ENCODE measurements at regions of chr15 and their contacts with region 1.

Region 1: DNA sequence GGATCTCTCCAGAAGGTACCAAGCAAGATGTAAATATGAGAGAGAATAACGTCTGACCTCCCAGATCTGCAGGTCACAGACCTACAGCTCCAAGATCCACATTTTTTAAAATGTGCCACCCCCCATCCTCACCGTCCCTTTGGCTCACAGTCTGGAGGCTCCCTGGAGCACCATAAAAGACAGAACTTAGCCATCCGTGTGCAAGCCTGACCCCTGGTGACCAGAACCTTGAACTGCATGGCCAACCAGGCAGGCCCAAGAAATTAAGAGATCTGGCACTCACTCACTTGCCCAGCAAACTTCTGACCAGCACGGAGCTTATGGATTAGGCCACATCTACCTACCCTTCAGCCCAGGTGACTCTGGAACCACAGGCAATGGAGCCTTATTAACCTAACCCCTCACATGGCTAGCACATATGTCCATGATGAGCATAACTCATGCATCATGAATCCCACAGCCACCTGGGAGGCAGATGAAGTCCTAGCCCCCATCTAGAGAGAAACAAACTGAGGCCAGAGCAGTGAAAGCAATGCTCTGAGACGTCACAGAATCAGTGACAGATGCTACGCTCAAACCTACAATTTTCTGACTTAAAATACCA is 275.3 kb downstream of the UACA start:
- DNase-seq: peak; percentile 60
- H3K4me3 ChIP-seq: no peak overlapping the region
- H3K27ac ChIP-seq: no peak overlapping the region
- H3K4me1 ChIP-seq: peaks cover 22% of the 10 kb centered on the region
- H3K27me3 ChIP-seq: peaks cover 11% of the 10 kb centered on the region
- CTCF ChIP-seq: peak; percentile 98 to 99

Region 2: DNA sequence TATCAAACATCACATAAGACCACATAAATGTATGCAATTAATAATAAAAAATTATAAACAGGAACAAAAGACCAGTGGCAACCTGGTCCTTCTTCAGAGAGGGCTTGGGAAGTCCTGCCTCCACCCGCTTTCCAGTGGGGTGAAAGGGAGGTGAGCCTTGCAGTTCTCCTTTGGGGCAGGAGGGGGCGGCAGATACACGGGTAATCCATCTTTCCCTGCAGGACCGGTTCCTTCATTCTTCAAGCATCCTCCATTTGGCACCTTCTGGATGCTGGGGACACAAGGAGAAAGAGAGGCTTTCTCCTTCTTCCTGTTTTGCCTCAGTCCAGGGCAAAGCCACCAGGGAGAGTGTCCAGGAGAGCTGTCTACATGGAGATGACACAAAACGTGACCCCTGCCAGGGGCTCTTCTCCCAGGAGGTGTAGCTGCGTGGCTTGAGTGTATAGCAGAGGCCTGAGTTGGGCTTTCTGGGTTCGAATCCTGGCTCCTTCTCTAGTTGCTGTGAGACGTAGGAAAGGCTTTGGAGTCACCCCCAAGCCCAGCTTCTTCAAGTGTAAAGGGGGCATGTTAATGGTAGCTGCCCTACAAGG is 1012.2 kb before region 1 on chr15:
- CTCF ChIA-PET with region 1: no interaction called
- dilution Hi-C with region 1: no loop called
- in situ Hi-C with region 1: loop called (anchors 10 to 25 kb)
- intact Hi-C with region 1: loop called (anchors 1 kb)
- DNase-seq: peak; percentile 65
- H3K4me3 ChIP-seq: no peak overlapping the region
- H3K27ac ChIP-seq: no peak overlapping the region
- H3K4me1 ChIP-seq: peaks cover 5% of the 10 kb centered on the region
- H3K27me3 ChIP-seq: no peaks in the 10 kb centered on the region
- CTCF ChIP-seq: peak; percentile 98

Region 3: GRCh38 chr15:69576035-69576526 is 912.0 kb before region 1 on chr15:
- CTCF ChIA-PET with region 1: no interaction called
- dilution Hi-C with region 1: no loop called
- in situ Hi-C with region 1: loop called in 1 of 2 experiments (anchors 10 kb)
- intact Hi-C with region 1: loop called (anchors 1 kb)
- DNase-seq: peak; percentile 19
- H3K4me3 ChIP-seq: no peak overlapping the region
- H3K27ac ChIP-seq: no peak overlapping the region
- H3K4me1 ChIP-seq: no peaks in the 10 kb centered on the region
- H3K27me3 ChIP-seq: no peaks in the 10 kb centered on the region
- CTCF ChIP-seq: peak; percentile 64 to 92

Region 4: DNA sequence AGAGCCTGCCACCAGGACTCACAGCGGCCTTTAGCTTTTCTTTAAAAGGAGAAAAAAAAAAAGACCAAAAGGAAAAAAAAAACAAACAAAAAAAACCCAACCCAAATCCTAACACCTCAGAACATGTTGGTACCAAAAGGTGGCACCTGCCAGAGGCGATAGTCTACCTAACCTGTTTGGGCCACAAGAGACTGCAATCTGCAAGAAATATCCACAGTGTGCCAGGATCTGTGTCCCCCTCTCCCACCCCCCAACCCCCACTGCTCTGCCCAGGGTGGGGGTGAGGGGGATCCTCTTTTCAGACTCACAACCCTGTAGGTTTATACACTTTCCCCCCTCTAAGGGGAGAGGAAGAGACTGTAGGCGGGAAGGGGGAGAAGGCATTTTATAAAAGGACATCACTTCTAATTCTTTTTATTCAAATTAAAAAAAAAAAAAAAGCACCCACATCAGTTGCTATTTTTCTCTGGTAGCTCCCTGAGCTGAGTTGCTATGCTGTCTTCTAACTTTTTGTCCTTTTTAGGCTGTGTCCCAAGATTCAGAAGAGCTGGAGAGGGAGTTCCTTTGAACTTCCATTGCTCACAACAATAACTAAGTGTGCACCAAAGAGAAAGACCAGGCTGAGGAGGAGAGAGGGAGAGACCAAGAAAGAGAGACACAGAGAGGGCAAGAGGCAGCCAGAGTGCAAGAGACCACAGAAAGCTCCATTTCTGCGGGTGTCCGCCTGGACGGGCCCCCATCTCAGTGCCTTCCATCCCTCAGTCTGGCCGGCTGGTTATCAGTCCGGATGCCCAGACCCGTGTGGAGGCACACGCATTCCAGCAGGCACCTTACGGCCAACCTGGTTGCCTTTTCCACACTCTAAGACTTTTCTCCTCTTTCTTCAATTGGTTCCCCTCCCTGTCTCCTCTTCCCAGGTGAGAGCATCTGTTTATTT is 439.3 kb before region 1 on chr15:
- CTCF ChIA-PET with region 1: interaction called, 12 read pairs
- dilution Hi-C with region 1: no loop called
- in situ Hi-C with region 1: no loop called
- intact Hi-C with region 1: no loop called
- DNase-seq: no peak
- H3K4me3 ChIP-seq: no peak overlapping the region
- H3K27ac ChIP-seq: no peak overlapping the region
- H3K4me1 ChIP-seq: no peaks in the 10 kb centered on the region
- H3K27me3 ChIP-seq: no peaks in the 10 kb centered on the region
- CTCF ChIP-seq: no peak

Region 5: DNA sequence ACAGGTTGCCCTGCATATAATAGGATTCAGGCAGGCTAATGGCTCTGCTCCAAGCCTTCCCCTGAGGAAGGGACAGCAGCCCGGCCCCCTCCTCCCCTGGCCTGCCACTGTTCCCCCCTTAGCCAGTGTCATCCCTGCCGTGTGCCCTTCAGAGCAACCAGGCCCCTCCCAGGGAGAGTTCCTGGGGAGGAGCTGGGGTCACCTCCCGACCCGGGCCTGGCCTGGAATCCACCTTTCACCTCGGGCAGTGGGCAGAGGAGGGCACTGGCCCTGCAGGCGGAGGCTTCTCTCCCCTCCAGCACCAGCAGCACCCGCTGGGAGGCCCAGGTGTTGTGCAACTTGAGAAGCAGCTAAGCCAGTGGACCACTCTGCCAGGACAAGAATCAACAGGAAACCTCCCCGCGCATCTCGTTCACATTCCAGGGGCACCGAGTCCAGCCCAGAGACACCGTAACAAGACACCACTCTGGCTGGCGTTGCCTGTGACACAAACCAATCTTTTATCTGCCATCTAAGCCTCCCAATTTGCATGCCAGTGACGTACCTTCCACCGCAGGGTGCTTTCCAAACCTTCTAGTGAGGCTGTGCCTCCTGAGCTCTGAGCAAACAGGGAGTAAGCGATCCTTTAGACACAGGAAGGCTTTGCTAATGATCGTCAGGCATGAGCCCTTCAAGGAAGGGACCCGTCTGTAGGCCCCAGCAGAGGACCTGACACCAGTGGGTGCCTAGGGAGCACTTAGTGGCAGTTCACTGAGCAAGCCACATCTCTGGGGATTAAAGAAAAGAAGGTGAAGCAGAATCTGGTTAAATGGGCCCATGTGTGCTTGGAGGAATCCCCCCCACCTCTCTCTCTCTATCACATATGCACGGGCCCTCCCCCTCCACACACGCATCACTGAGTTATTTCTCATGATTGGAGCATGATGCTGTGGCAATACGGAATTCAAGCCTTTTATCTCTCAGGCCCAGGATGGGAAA is 291.5 kb before region 1 on chr15:
- CTCF ChIA-PET with region 1: no interaction called
- dilution Hi-C with region 1: no loop called
- in situ Hi-C with region 1: no loop called
- intact Hi-C with region 1: loop called (anchors 5 kb)
- DNase-seq: peak; percentile 100
- H3K4me3 ChIP-seq: no peak overlapping the region
- H3K27ac ChIP-seq: peak overlapping the region; percentile 90
- H3K4me1 ChIP-seq: peaks cover 33% of the 10 kb centered on the region
- H3K27me3 ChIP-seq: no peaks in the 10 kb centered on the region
- CTCF ChIP-seq: peak in 1 of 2 donors; percentile 26

Region 6: DNA sequence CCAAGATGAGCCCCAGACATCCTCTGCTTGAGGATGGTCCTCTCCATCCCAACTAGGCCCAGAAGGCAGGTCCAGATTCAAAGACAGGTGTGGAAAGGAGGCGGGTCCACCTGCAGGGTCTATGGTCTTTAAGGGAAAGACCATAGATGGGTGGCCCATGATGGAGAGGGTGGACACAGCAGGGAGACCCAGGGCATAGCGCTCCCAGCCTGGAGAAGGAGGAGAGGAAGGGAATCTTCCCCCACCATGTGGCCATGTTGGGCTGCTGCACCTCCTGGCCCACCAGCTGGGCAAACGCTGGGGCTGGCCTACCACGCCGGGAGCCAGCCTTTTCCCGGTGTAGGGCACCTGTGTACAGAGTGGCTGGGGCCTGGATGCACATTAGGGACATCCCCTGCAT is 125.2 kb before region 1 on chr15:
- CTCF ChIA-PET with region 1: no interaction called
- dilution Hi-C with region 1: no loop called
- in situ Hi-C with region 1: no loop called
- intact Hi-C with region 1: loop called (anchors 1 kb)
- DNase-seq: no peak
- H3K4me3 ChIP-seq: no peak overlapping the region
- H3K27ac ChIP-seq: no peak overlapping the region
- H3K4me1 ChIP-seq: no peaks in the 10 kb centered on the region
- H3K27me3 ChIP-seq: no peaks in the 10 kb centered on the region
- CTCF ChIP-seq: peak; percentile 31 to 58

Region 7: DNA sequence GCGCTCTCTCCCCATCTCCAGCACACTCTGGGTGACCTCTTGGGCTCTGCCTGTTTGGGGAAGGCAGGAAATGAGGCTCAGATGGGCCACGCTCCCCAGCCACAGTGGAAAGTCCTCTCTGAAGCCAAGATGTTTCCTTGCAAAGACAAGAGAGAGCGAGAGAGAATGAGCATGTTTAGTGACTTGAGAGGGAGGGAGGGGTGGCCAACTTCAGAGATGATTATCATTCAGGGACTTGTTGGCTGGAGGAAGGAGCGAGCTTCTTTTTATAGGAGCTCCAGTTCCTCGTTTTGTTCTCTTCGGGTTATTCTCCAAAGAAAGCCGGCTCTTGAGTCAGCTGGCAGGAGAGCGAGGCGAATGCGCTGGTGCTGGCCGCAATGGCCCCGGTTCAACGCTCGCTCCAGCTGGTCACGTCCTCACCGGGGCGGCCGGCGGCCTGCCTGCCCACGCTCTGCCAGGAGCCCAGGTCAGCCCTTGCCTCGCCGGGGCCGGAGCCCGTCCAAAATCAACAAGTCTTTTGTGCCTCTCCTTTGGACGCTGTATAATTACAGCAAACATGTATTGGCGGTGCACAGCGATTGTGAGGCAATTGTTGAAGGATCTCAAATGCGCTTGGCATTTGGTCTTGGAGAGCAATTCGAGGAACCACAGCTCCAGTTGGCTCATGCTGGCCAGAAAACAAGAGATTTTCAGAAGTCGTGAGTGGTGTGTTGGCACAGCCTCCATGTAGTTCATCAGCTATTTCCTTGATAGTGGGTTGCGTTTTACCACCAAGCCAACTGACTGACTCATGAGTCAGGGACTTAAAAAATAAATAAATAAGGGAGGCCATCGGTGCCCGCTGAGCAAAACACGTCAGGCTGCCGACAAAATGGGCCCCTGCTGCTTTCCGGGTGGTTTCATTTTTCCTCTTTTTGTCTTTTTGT is 13.4 kb before region 1 on chr15:
- CTCF ChIA-PET with region 1: no interaction called
- dilution Hi-C with region 1: no loop called
- in situ Hi-C with region 1: no loop called
- intact Hi-C with region 1: loop called (anchors 1 kb)
- DNase-seq: peak; percentile 98
- H3K4me3 ChIP-seq: peak overlapping the region in 2 of 3 experiments; percentile 2 to 29
- H3K27ac ChIP-seq: peak overlapping the region; percentile 58
- H3K4me1 ChIP-seq: peaks cover 31% of the 10 kb centered on the region
- H3K27me3 ChIP-seq: peaks cover 7% of the 10 kb centered on the region
- CTCF ChIP-seq: no peak

Region 8: DNA sequence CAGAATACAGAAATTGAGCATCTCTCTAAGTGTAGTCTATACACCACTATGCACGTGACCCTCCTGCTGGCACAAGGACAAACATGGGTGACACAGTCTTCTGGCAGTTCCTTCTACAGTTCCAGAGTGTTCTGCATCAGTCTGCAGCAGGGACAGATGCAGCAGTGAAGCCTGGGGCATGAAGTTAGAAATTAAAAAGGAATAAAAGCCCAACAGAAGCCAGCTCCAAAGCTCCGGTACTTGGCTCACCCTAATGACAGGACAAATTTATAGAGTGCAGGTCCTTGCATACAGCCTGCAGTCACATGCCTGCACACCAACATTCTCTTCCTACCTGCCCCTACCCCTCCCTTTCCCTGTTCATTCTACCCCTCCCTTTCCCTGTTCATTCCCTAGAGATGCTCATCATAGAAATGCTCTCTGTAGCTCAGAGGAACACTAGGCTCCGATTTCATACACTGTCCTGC is 260.2 kb after region 1 on chr15:
- CTCF ChIA-PET with region 1: no interaction called
- dilution Hi-C with region 1: no loop called
- in situ Hi-C with region 1: no loop called
- intact Hi-C with region 1: no loop called
- DNase-seq: no peak
- H3K4me3 ChIP-seq: no peak overlapping the region
- H3K27ac ChIP-seq: no peak overlapping the region
- H3K4me1 ChIP-seq: peaks cover 3% of the 10 kb centered on the region
- H3K27me3 ChIP-seq: no peaks in the 10 kb centered on the region
- CTCF ChIP-seq: no peak

Measured in mammary epithelial cell (primary cell).